ENCODE measurements at regions of chr19 and their contacts with region 1.

Region 1: GRCh38 chr19:20051841-20052768 is 12.8 kb upstream of the ZNF682 start:
- DNase-seq: peak; percentile 88
- H3K4me3 ChIP-seq: peak overlapping the region; percentile 54
- H3K27me3 ChIP-seq: no peaks in the 10 kb centered on the region
- CTCF ChIP-seq: 0 out of 2 replicates have a peak, but pooled peaks have one; percentile 3

Region 2: DNA sequence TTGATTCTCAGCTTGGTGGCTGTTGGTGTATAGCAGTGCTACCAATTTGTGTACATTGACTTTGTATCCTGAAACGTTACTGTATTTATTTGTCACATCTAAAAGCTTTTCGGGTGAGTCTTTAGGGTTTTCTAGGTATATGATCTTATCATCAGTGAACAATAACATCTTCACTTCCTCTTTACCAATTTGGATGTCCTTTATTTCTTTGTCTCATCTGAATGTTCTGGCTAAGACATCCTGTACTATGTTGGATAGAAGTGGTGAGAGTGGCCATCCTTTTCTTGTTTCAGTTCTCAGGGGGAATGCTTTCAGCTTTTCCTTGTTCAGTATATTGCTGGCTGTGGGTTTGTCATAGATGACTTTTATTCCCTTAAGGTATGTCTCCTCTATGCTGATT is 1300.7 kb after region 1 on chr19:
- CTCF ChIA-PET with region 1: no interaction called
- POLR2A ChIA-PET with region 1: interaction called, 13 read pairs
- DNase-seq: no peak
- H3K4me3 ChIP-seq: no peak overlapping the region
- H3K27me3 ChIP-seq: no peaks in the 10 kb centered on the region
- CTCF ChIP-seq: no peak